ENCODE measurements at regions of chr1 and their contacts with region 1.

Region 1: GRCh38 chr1:21176586-21177555 is at the start of gene EIF4G3:
- DNase-seq: peak; percentile 100
- H3K4me3 Mint-ChIP-seq: peak within 1 kb of the TSS; percentile 83
- H3K27ac Mint-ChIP-seq: peak within 1 kb of the TSS; percentile 92
- H3K4me1 Mint-ChIP-seq: peaks cover 24% of the 10 kb centered on the region
- H3K27me3 Mint-ChIP-seq: no peaks in the 10 kb centered on the region
- total RNA-seq, gene EIF4G3: 44.6 to 48.0 TPM

Region 2: DNA sequence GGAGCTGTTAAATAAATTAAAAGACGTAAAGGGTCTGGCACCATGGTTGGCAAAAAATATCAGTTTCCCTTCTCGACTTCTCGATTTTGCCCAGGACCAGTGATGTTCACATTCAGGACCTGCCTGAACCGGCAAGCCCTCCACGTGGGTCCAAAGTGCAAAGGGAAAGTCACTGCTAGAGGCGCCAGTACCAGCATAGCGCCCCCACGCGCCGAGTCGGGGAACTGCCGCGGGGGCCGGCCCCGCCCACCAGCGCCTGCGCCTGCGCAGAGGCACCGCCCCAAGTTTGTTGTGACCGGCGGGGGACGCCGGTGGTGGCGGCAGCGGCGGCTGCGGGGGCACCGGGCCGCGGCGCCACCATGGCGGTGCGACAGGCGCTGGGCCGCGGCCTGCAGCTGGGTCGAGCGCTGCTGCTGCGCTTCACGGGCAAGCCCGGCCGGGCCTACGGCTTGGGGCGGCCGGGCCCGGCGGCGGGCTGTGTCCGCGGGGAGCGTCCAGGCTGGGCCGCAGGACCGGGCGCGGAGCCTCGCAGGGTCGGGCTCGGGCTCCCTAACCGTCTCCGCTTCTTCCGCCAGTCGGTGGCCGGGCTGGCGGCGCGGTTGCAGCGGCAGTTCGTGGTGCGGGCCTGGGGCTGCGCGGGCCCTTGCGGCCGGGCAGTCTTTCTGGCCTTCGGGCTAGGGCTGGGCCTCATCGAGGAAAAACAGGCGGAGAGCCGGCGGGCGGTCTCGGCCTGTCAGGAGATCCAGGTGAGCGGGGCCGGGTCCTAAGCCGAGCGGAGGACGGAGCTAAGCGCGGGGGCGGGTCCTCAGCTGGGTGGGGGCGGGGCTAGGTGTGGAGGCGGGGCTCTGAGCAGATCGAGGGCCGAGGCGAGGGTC is 543.4 kb before region 1 on chr1 and contains the start of gene PINK1:
- CTCF ChIA-PET with region 1: no interaction called
- intact Hi-C with region 1: loop called (anchors 5 kb)
- DNase-seq: peak; percentile 86
- H3K4me3 Mint-ChIP-seq: peak within 1 kb of the TSS; percentile 81
- H3K27ac Mint-ChIP-seq: peak within 1 kb of the TSS; percentile 30
- H3K4me1 Mint-ChIP-seq: peaks cover 9% of the 10 kb centered on the region
- H3K27me3 Mint-ChIP-seq: no peaks in the 10 kb centered on the region
- total RNA-seq, gene PINK1: 1.4 to 1.5 TPM

Region 3: GRCh38 chr1:20661207-20662109 is 515.4 kb before region 1 on chr1 and contains the start of gene DDOST:
- CTCF ChIA-PET with region 1: interaction called, 3 read pairs
- intact Hi-C with region 1: loop called (anchors 1 kb)
- DNase-seq: peak; percentile 97
- H3K4me3 Mint-ChIP-seq: peak within 1 kb of the TSS; percentile 99
- H3K27ac Mint-ChIP-seq: peak within 1 kb of the TSS; percentile 99
- H3K4me1 Mint-ChIP-seq: peaks cover 50% of the 10 kb centered on the region
- H3K27me3 Mint-ChIP-seq: no peaks in the 10 kb centered on the region
- total RNA-seq, gene DDOST: 167 to 169 TPM

Region 4: GRCh38 chr1:20732588-20733360 is 444.1 kb before region 1 on chr1 and contains the start of gene SH2D5:
- CTCF ChIA-PET with region 1: no interaction called
- intact Hi-C with region 1: loop called (anchors 1 kb)
- DNase-seq: peak; percentile 88
- H3K4me3 Mint-ChIP-seq: peak within 1 kb of the TSS; percentile 79
- H3K27ac Mint-ChIP-seq: no peak within 1 kb of the TSS
- H3K4me1 Mint-ChIP-seq: peaks cover 10% of the 10 kb centered on the region
- H3K27me3 Mint-ChIP-seq: peaks cover 32% of the 10 kb centered on the region
- total RNA-seq, gene SH2D5: 0.15 to 0.29 TPM

Region 5: DNA sequence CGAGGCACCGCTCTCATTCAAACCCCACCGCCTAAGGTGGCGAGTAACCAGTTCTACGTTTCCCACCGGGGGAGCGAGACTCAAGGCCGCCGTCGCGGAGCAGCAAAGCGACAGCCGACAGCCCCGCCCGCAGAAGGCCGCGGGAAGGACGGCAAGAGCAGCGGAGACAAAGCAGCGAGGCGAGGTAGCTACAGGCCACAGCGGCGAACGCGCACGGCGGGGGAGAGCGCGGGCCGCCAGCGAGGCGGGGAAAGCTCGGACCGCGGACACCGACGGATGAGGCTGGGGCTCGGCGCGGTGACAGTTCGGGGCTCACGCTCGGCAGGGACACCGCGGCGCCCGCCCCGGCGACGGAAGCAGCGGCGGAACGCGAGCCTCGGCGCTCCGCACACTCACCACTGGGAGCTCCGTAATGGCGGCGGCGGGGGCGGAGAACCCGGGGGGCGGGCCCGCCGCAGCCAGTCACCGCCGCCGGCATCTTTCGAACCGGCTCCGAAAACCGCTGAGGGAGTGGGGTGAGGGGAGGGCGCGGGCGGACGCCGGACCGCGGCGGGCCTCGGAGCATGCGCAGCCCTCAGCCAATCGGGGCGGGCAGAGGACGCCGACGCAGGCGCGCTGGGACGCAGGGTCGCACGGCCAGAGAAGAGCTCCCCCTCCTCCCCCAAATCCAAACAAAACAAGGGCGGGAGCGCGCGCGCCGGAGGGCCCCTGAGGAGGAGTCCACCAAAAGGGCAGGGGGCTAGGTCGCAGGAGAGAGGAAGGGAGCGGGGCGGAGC is 390.4 kb before region 1 on chr1:
- CTCF ChIA-PET with region 1: interaction called, 3 read pairs
- intact Hi-C with region 1: loop called (anchors 1 kb)
- DNase-seq: peak; percentile 97
- H3K4me3 Mint-ChIP-seq: peak overlapping the region; percentile 87
- H3K27ac Mint-ChIP-seq: peak overlapping the region; percentile 94
- H3K4me1 Mint-ChIP-seq: peaks cover 32% of the 10 kb centered on the region
- H3K27me3 Mint-ChIP-seq: peaks cover 2% of the 10 kb centered on the region

Region 6: DNA sequence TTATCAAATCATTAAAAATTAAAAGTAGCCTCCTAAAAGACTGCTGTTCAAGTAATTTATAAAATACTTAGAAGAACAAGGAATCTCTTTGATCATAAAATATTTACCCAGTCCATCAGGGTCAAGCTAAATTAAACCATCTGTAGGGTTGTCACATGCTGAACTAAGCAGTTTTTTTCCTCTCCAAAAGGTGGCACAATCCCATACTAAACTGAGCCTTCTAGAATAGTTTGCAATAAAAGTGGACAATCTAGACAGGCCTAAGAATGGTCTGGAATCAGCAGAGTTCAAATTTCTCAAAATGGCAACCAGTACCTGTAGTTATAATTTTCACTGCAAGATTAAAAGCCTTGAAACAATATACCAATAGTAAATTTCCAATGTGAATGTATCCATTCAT is 195.0 kb before region 1 on chr1:
- CTCF ChIA-PET with region 1: no interaction called
- intact Hi-C with region 1: loop called (anchors 5 kb)
- DNase-seq: no peak
- H3K4me3 Mint-ChIP-seq: no peak overlapping the region
- H3K27ac Mint-ChIP-seq: no peak overlapping the region
- H3K4me1 Mint-ChIP-seq: no peaks in the 10 kb centered on the region
- H3K27me3 Mint-ChIP-seq: no peaks in the 10 kb centered on the region

Region 7: DNA sequence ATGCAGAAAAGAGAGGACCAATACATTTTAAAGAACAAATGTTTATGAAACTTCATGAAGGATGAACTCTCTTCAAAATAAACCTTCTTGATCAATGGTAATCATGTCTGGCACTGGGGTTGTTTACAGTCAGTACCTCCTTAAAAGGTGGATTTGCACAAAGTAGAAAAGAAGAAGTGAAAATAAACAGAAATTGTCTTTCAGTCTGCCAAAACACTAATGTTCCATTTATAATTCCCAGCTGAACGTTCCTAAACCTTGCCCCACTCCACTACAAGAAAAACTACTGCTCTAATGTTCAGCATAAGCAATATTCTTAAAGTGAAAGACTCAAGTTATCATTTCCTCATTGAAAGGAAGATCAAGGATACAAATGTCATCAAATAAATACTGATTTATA is 86.4 kb before region 1 on chr1:
- CTCF ChIA-PET with region 1: no interaction called
- intact Hi-C with region 1: no loop called
- DNase-seq: no peak
- H3K4me3 Mint-ChIP-seq: no peak overlapping the region
- H3K27ac Mint-ChIP-seq: no peak overlapping the region
- H3K4me1 Mint-ChIP-seq: peaks cover 6% of the 10 kb centered on the region
- H3K27me3 Mint-ChIP-seq: no peaks in the 10 kb centered on the region

Region 8: GRCh38 chr1:21200767-21201166 is 23.9 kb after region 1 on chr1:
- CTCF ChIA-PET with region 1: interaction called, 11 read pairs
- intact Hi-C with region 1: no loop called
- DNase-seq: no peak
- H3K4me3 Mint-ChIP-seq: no peak overlapping the region
- H3K27ac Mint-ChIP-seq: no peak overlapping the region
- H3K4me1 Mint-ChIP-seq: no peaks in the 10 kb centered on the region
- H3K27me3 Mint-ChIP-seq: peaks cover 4% of the 10 kb centered on the region

Measured in activated naive CD4-positive, alpha-beta T cell treated with anti-CD3 and anti-CD28 coated beads for 36 hours (primary cell).